ENCODE measurements at regions of chr15 and their contacts with region 1.

Region 1: GRCh38 chr15:99755692-99756409 is 22.6 kb upstream of the LYSMD4 start:
- DNase-seq: peak; percentile 50
- ATAC-seq: peak; percentile 89
- H3K4me3 Mint-ChIP-seq: no peak overlapping the region
- H3K27ac Mint-ChIP-seq: no peak overlapping the region
- H3K4me1 Mint-ChIP-seq: peaks cover 6% of the 10 kb centered on the region
- H3K27me3 Mint-ChIP-seq: peaks cover 8% of the 10 kb centered on the region

Region 2: GRCh38 chr15:99733268-99734039 is 22.4 kb before region 1 on chr15 and contains the start of gene LYSMD4:
- CTCF ChIA-PET with region 1: interaction called, 12 read pairs
- DNase-seq: peak; percentile 99
- ATAC-seq: peak; percentile 100
- H3K4me3 Mint-ChIP-seq: peak within 1 kb of the TSS; percentile 75
- H3K27ac Mint-ChIP-seq: peak within 1 kb of the TSS; percentile 85
- H3K4me1 Mint-ChIP-seq: peaks cover 26% of the 10 kb centered on the region
- H3K27me3 Mint-ChIP-seq: no peaks in the 10 kb centered on the region
- total RNA-seq, gene LYSMD4: 8.3 to 8.5 TPM

Measured in activated CD8-positive, alpha-beta memory T cell treated with anti-CD3 and anti-CD28 coated beads, Interleukin-2, amount 10 ng/mL, durations not matched to agents 7 days and 5 days (primary cell).